Activated CD4-positive, alpha-beta T cell treated with anti-CD3 and anti-CD28 coated beads, Interleukin-2, amount 10 ng/mL, durations not matched to agents 24 days and 14 days (primary cell): ENCODE measurements at regions of chr10 and their contacts with region 1.

Region 1: GRCh38 chr10:89563861-89564478 is 28.6 kb upstream of the SLC16A12 start:
- DNase-seq: peak; percentile 76
- H3K4me3 Mint-ChIP-seq: no peak overlapping the region
- H3K27ac Mint-ChIP-seq: no peak overlapping the region
- H3K4me1 Mint-ChIP-seq: no peaks in the 10 kb centered on the region
- H3K27me3 Mint-ChIP-seq: peaks cover 51% of the 10 kb centered on the region

Region 2: GRCh38 chr10:89217057-89217990 is 346.6 kb before region 1 on chr10:
- intact Hi-C with region 1: loop called (anchors 2 kb)
- DNase-seq: peak; percentile 89
- H3K4me3 Mint-ChIP-seq: no peak overlapping the region
- H3K27ac Mint-ChIP-seq: no peak overlapping the region
- H3K4me1 Mint-ChIP-seq: peaks cover 9% of the 10 kb centered on the region
- H3K27me3 Mint-ChIP-seq: peaks cover 2% of the 10 kb centered on the region

Region 3: GRCh38 chr10:89296220-89296648 is 267.7 kb before region 1 on chr10:
- intact Hi-C with region 1: loop called (anchors 10 kb)
- DNase-seq: no peak
- H3K4me3 Mint-ChIP-seq: no peak overlapping the region
- H3K27ac Mint-ChIP-seq: no peak overlapping the region
- H3K4me1 Mint-ChIP-seq: peaks cover 18% of the 10 kb centered on the region
- H3K27me3 Mint-ChIP-seq: peaks cover 16% of the 10 kb centered on the region

Region 4: GRCh38 chr10:89426230-89426868 is 137.6 kb before region 1 on chr10:
- intact Hi-C with region 1: loop called (anchors 1 kb)
- DNase-seq: peak; percentile 71
- H3K4me3 Mint-ChIP-seq: no peak overlapping the region
- H3K27ac Mint-ChIP-seq: no peak overlapping the region
- H3K4me1 Mint-ChIP-seq: no peaks in the 10 kb centered on the region
- H3K27me3 Mint-ChIP-seq: peaks cover 17% of the 10 kb centered on the region

Region 5: GRCh38 chr10:89553064-89553734 is 10.8 kb before region 1 on chr10:
- intact Hi-C with region 1: no loop called
- DNase-seq: no peak
- H3K4me3 Mint-ChIP-seq: no peak overlapping the region
- H3K27ac Mint-ChIP-seq: no peak overlapping the region
- H3K4me1 Mint-ChIP-seq: no peaks in the 10 kb centered on the region
- H3K27me3 Mint-ChIP-seq: peaks cover 10% of the 10 kb centered on the region